Mammary epithelial cell (primary cell): ENCODE measurements at regions of chr9 and their contacts with region 1.

Region 1: GRCh38 chr9:21434202-21435014 is 5.8 kb upstream of the IFNA1 start:
- DNase-seq: peak; percentile 40
- H3K4me3 ChIP-seq: no peak overlapping the region
- H3K27ac ChIP-seq: no peak overlapping the region
- H3K4me1 ChIP-seq: no peaks in the 10 kb centered on the region
- H3K27me3 ChIP-seq: peaks cover 3% of the 10 kb centered on the region
- CTCF ChIP-seq: peak; percentile 71 to 72

Region 2: DNA sequence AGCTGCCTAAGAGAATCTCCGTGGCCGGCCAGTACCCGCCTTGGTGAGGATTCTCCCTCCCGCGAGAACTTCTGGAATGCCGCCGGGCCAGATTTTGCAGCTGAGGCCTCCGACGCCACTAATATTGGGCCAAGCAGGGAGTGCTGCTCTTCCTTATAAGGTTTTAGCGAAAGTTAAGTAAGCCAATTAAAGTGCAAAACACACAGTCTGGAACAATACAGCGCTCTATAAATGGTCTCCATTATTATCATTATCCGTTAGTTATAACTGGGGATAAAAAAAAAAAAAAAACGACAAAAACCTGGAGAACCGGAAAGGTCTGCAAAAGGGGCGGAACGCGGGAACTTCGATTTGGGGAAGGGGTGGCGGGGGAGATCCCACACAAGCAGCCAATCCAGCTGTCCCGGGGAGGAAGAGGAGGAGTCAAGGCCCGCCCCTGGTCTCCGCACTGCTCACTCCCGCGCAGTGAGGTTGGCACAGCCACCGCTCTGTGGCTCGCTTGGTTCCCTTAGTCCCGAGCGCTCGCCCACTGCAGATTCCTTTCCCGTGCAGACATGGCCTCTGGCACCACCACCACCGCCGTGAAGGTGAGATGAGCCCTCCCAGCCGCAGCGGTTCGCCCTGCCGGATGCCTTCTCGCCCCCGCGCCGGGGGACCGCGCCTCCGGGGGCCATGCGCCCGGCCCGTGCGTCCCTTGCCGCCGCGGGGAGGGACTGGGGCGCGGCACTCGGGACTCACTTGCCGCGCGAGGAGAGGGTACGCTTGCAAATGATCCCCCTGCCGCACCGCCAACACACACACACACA is 368.0 kb after region 1 on chr9 and contains the start of gene MTAP:
- CTCF ChIA-PET with region 1: no interaction called
- dilution Hi-C with region 1: no loop called
- in situ Hi-C with region 1: loop called in 1 of 2 experiments (anchors 10 kb)
- intact Hi-C with region 1: loop called (anchors 5 kb)
- DNase-seq: peak; percentile 89
- H3K4me3 ChIP-seq: peak within 1 kb of the TSS; percentile 67 to 71 (median 68)
- H3K27ac ChIP-seq: peak within 1 kb of the TSS; percentile 86
- H3K4me1 ChIP-seq: peaks cover 31% of the 10 kb centered on the region
- H3K27me3 ChIP-seq: no peaks in the 10 kb centered on the region
- CTCF ChIP-seq: no peak
- total RNA-seq, gene MTAP: 51.5 to 96.9 TPM